H1 (cell line): ENCODE measurements at regions of chr20 and their contacts with region 1.

Region 1: DNA sequence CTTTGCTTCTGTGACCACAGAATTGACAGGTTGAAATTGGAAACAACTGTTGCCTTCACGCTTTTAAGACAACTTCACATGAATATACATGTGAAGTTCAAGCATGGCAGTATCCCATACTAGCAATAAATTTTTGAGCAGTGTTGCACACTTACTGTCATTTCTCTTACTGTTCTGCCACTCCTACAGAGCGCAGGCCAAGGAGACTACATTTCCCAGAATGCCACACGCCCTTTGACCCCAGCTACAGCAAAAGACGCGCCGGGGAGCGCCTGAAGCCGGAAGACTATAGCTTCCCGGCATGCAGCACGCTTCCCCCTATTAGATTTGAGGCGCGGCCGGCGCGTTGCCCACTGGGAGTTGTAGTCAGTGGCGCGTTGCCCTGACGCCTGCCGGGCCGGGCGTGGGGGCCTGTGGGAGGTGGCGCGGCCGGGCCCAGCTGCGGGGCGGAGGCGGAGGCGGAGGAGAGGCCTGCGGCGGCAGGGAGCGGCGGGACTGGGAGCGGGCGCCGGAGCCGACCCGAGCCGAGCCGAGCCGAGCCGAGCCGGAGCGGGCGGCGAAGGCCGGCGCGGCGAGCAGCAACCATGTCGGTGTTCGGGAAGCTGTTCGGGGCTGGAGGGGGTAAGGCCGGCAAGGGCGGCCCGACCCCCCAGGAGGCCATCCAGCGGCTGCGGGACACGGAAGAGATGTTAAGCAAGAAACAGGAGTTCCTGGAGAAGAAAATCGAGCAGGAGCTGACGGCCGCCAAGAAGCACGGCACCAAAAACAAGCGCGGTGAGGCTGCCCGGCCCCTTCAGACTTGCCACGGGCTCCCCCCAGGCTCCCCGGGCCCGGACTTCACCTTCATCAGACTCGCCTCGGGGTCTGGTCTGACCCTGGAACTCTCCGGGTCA is at the start of gene CHMP4B:
- DNase-seq: peak; percentile 85 to 95
- H3K4me3 ChIP-seq: peak within 1 kb of the TSS; percentile 77 to 96 (median 94)
- H3K27ac ChIP-seq: peak within 1 kb of the TSS; percentile 70
- H3K4me1 ChIP-seq: peaks cover 3 to 8% (median 6%) of the 10 kb centered on the region in 4 experiments; a peak in 6 of 7 replicates
- H3K27me3 ChIP-seq: no peaks in the 10 kb centered on the region
- CTCF ChIP-seq: no peak
- EP300 ChIP-seq: no peak
- POLR2A ChIP-seq: peak in 1 of 2 experiments; percentile 64; a peak in 2 of 3 replicates
- RAD21 ChIP-seq: no peak
- total RNA-seq, gene CHMP4B: 66.3 and 67.8 TPM in 2 replicates

Region 2: GRCh38 chr20:33744773-33745385 is 66.3 kb before region 1 on chr20:
- CTCF ChIA-PET with region 1: no interaction called
- POLR2A ChIA-PET with region 1: no interaction called
- DNase-seq: no peak
- H3K4me3 ChIP-seq: no peak overlapping the region
- H3K27ac ChIP-seq: no peak overlapping the region
- H3K4me1 ChIP-seq: peaks cover 0 to 2% (median 0%) of the 10 kb centered on the region in 4 experiments; a peak in 1 of 7 replicates
- H3K27me3 ChIP-seq: no peaks in the 10 kb centered on the region
- CTCF ChIP-seq: no peak
- EP300 ChIP-seq: no peak
- POLR2A ChIP-seq: no peak
- RAD21 ChIP-seq: no peak

Region 3: GRCh38 chr20:33826270-33826897 is 15.3 kb after region 1 on chr20:
- CTCF ChIA-PET with region 1: interaction called, 4 read pairs
- POLR2A ChIA-PET with region 1: interaction called, 21 read pairs
- DNase-seq: no peak
- H3K4me3 ChIP-seq: no peak overlapping the region
- H3K27ac ChIP-seq: 0 out of 2 replicates have a peak overlapping the region, but pooled peaks have one; percentile 43
- H3K4me1 ChIP-seq: peaks cover 0 to 10% (median 2%) of the 10 kb centered on the region in 4 experiments; a peak in 2 of 7 replicates
- H3K27me3 ChIP-seq: no peaks in the 10 kb centered on the region
- CTCF ChIP-seq: no peak
- EP300 ChIP-seq: no peak
- POLR2A ChIP-seq: no peak
- RAD21 ChIP-seq: no peak

Region 4: GRCh38 chr20:33896509-33896908 is 85.4 kb after region 1 on chr20:
- CTCF ChIA-PET with region 1: no interaction called
- POLR2A ChIA-PET with region 1: no interaction called
- DNase-seq: no peak
- H3K4me3 ChIP-seq: no peak overlapping the region
- H3K27ac ChIP-seq: no peak overlapping the region
- H3K4me1 ChIP-seq: peaks cover 0 to 1% (median 0%) of the 10 kb centered on the region in 4 experiments; a peak in 2 of 7 replicates
- H3K27me3 ChIP-seq: no peaks in the 10 kb centered on the region
- CTCF ChIP-seq: no peak
- EP300 ChIP-seq: no peak
- POLR2A ChIP-seq: no peak
- RAD21 ChIP-seq: no peak